Ascending aorta (tissue), 2 donors: ENCODE measurements at regions of chr16 and their contacts with region 1.

Region 1: GRCh38 chr16:53054670-53055485 is at the start of gene CHD9:
- DNase-seq: peak; percentile 30 to 90
- H3K4me3 ChIP-seq: peak within 1 kb of the TSS; percentile 47 to 90
- H3K27ac ChIP-seq: peak within 1 kb of the TSS; percentile 82 to 88
- H3K4me1 ChIP-seq: peaks cover 0 to 14% of the 10 kb centered on the region in 2 donors
- H3K27me3 ChIP-seq: no peaks in the 10 kb centered on the region
- CTCF ChIP-seq: peak; percentile 99 to 100 (median 99)
- total RNA-seq, gene CHD9: 56.9 TPM

Region 2: GRCh38 chr16:52480237-52480636 is 574.6 kb before region 1 on chr16:
- intact Hi-C with region 1: no loop called
- DNase-seq: no peak
- H3K4me3 ChIP-seq: no peak overlapping the region
- H3K27ac ChIP-seq: no peak overlapping the region
- H3K4me1 ChIP-seq: no peaks in the 10 kb centered on the region
- H3K27me3 ChIP-seq: no peaks in the 10 kb centered on the region
- CTCF ChIP-seq: no peak

Region 3: DNA sequence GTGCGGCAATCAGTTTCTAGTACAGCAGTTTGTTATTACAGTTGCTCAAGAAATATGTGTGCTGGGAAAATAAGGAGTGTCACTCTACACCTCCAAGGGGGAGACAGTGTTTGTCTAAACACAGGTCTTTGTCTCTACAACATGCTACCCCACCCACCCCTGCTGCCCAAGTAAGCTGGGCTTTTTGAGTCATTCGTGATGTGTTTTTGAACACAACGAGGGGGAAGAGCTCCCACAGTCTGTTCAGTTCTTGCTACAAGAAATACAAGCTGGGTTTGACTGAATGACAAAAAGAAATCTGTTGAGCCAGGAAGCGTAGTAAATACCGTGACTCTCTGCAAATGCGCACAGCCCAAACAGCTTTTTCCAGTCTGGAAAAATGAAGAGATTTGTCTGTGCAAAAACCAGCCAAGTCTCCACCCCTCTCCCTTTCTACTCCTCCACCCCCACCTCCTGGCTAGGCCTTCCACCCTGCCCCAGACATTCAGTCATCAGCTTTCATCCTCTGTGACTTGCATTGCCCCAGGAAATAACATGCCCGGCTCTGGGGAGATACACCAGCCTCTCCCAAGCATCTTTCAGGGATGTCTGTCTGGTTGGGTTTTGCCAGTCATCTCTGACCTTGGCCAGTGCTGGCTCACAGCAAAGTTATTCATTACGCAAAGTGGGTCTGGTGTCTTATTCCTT is 25.6 kb after region 1 on chr16:
- intact Hi-C with region 1: loop called (anchors 2 kb)
- DNase-seq: peak in 1 of 2 donors; percentile 82
- H3K4me3 ChIP-seq: peak overlapping the region; percentile 32 to 39
- H3K27ac ChIP-seq: peak overlapping the region; percentile 80 to 89
- H3K4me1 ChIP-seq: peaks cover 5 to 37% of the 10 kb centered on the region in 2 donors
- H3K27me3 ChIP-seq: no peaks in the 10 kb centered on the region
- CTCF ChIP-seq: no peak

Region 4: GRCh38 chr16:53091466-53092211 is 36.8 kb after region 1 on chr16:
- intact Hi-C with region 1: loop called (anchors 2 kb)
- DNase-seq: peak in 1 of 2 donors; percentile 76
- H3K4me3 ChIP-seq: peak overlapping the region in 1 of 2 donors; percentile 44
- H3K27ac ChIP-seq: peak overlapping the region; percentile 80 to 88
- H3K4me1 ChIP-seq: peaks cover 19 to 44% of the 10 kb centered on the region in 2 donors
- H3K27me3 ChIP-seq: no peaks in the 10 kb centered on the region
- CTCF ChIP-seq: no peak

Region 5: GRCh38 chr16:53099318-53100130 is 44.6 kb after region 1 on chr16:
- intact Hi-C with region 1: loop called (anchors 2 kb)
- DNase-seq: peak; percentile 79 to 96
- H3K4me3 ChIP-seq: peak overlapping the region; percentile 52 to 61
- H3K27ac ChIP-seq: peak overlapping the region; percentile 93 to 94
- H3K4me1 ChIP-seq: peaks cover 5 to 32% of the 10 kb centered on the region in 2 donors
- H3K27me3 ChIP-seq: no peaks in the 10 kb centered on the region
- CTCF ChIP-seq: no peak

Region 6: DNA sequence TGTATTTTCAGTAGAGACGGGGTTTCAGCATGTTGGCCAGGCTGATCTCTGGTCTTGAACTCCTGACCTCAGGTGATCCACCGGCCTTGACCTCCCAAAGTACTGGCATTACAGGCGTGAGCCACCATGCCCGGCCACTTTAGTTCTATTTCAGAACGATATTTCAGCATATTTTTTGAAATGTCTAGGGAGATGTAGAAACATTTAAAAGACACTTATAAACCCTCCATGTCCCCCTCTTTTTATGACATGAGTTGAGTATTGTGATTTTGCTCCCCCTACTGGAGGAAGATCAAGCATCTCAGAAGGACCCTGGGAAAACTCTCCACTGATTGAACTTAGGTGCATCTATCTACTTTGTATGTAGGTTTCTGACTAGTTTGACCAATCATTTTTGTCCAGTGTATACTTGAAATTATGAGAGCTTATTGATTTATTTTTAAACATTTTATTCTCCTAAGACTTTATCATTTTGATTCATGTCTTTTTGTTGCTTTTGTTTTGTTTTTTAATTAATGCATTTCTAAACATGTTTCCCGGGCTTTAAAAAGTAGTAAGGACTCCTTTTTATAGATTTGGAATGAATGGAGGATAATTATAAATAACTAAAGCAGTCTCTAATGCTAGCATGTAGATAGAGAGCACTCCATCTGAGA is 105.0 kb after region 1 on chr16:
- intact Hi-C with region 1: loop called (anchors 2 kb)
- DNase-seq: no peak
- H3K4me3 ChIP-seq: no peak overlapping the region
- H3K27ac ChIP-seq: peak overlapping the region in 1 of 2 donors; percentile 73
- H3K4me1 ChIP-seq: peaks cover 4 to 7% of the 10 kb centered on the region in 2 donors
- H3K27me3 ChIP-seq: no peaks in the 10 kb centered on the region
- CTCF ChIP-seq: peak; percentile 31 to 68 (median 50)

Region 7: DNA sequence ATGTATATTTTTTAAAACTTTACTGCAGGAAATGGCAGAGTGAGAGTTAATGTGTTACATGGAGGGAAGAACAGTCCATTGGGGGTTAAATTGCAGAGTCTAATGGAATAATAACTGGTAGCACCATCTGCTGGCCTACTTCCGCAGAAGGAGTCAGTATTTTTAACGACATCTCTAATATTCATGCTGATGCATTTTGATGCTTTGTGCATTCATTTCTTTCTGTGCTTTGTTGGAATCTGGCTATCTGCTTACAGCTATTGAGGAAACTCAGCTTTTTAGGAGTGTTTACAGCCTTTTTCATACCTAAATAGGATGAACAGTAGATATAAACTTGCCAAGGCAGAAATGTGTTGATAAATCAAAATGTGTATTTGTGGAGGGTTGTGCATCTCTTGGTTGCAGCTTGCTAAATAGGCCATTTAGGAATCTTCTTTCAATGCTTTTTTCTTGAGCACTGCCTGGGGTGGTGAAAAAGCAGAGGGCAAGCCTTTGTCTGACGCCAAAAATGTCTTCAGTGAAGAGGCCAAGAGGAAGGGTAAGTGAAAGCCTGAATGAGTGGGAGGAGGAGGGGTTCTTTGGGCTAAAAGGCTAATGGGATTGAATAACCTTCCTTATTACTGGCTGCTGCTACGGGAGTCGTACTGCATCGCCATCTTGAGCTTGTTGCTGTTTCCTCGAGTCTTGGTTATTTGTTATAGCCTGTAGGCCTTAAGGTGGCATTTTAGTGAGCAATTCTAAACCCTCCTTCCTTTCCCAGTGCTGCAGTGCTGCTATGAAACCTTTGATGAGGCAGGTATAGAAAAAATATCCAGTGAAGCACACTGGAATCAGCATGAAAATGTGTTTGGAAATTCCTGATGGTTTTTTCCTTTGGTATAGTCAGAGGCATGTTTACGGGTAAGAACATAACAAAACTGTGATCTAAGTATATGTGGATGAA is 153.2 kb after region 1 on chr16:
- intact Hi-C with region 1: loop called (anchors 2 kb)
- DNase-seq: peak in 1 of 2 donors; percentile 67
- H3K4me3 ChIP-seq: peak overlapping the region; percentile 46 to 55
- H3K27ac ChIP-seq: peak overlapping the region; percentile 66 to 68
- H3K4me1 ChIP-seq: peaks cover 0 to 34% of the 10 kb centered on the region in 2 donors
- H3K27me3 ChIP-seq: no peaks in the 10 kb centered on the region
- CTCF ChIP-seq: peak; percentile 30 to 53 (median 40)

Region 8: GRCh38 chr16:53503270-53503923 is 448.5 kb after region 1 on chr16:
- intact Hi-C with region 1: loop called (anchors 10 kb)
- DNase-seq: peak; percentile 100
- H3K4me3 ChIP-seq: peak overlapping the region; percentile 83 to 93
- H3K27ac ChIP-seq: peak overlapping the region; percentile 91 to 97
- H3K4me1 ChIP-seq: peaks cover 10 to 27% of the 10 kb centered on the region in 2 donors
- H3K27me3 ChIP-seq: no peaks in the 10 kb centered on the region
- CTCF ChIP-seq: no peak